ENCODE measurements at regions of chr4 and their contacts with region 1.

Region 1: GRCh38 chr4:117203231-117203630 is 117.9 kb upstream of the TRAM1L1 start:
- DNase-seq: no peak
- ATAC-seq: no peak
- H3K4me3 ChIP-seq: no peak overlapping the region
- H3K27ac ChIP-seq: no peak overlapping the region
- H3K4me1 ChIP-seq: no peaks in the 10 kb centered on the region
- H3K27me3 ChIP-seq: no peaks in the 10 kb centered on the region
- CTCF ChIP-seq: no peak
- POLR2A ChIP-seq: no peak
- RAD21 ChIP-seq: no peak

Region 2: DNA sequence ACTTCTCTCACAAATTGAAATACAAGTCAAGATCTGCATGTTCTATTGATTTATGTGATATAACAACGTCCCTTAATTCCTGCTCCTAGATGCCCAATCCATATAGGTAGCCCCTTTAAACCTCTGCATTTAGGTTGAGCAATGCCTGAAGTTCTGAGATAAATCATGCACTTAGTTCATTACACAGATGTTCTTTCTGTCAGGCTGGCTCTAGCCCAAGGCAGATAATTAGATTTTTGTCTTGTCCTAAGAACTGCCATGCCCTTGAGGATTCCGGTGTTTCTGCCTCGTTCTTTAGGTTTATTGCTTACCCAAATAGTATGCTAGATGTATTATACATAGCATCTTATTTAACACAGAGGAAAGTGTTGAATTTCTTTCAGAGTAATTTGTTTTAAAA is 260.9 kb before region 1 on chr4:
- CTCF ChIA-PET with region 1: no interaction called
- POLR2A ChIA-PET with region 1: no interaction called
- dilution Hi-C with region 1: no loop called
- in situ Hi-C with region 1: no loop called
- intact Hi-C with region 1: no loop called
- DNase-seq: no peak
- ATAC-seq: no peak
- H3K4me3 ChIP-seq: no peak overlapping the region
- H3K27ac ChIP-seq: no peak overlapping the region
- H3K4me1 ChIP-seq: no peaks in the 10 kb centered on the region
- H3K27me3 ChIP-seq: no peaks in the 10 kb centered on the region
- CTCF ChIP-seq: no peak
- POLR2A ChIP-seq: no peak
- RAD21 ChIP-seq: no peak

Region 3: GRCh38 chr4:117010695-117011094 is 192.5 kb before region 1 on chr4:
- CTCF ChIA-PET with region 1: no interaction called
- POLR2A ChIA-PET with region 1: no interaction called
- dilution Hi-C with region 1: no loop called
- in situ Hi-C with region 1: no loop called
- intact Hi-C with region 1: no loop called
- DNase-seq: no peak
- ATAC-seq: no peak
- H3K4me3 ChIP-seq: no peak overlapping the region
- H3K27ac ChIP-seq: no peak overlapping the region
- H3K4me1 ChIP-seq: no peaks in the 10 kb centered on the region
- H3K27me3 ChIP-seq: no peaks in the 10 kb centered on the region
- CTCF ChIP-seq: no peak
- POLR2A ChIP-seq: no peak
- RAD21 ChIP-seq: no peak

Region 4: DNA sequence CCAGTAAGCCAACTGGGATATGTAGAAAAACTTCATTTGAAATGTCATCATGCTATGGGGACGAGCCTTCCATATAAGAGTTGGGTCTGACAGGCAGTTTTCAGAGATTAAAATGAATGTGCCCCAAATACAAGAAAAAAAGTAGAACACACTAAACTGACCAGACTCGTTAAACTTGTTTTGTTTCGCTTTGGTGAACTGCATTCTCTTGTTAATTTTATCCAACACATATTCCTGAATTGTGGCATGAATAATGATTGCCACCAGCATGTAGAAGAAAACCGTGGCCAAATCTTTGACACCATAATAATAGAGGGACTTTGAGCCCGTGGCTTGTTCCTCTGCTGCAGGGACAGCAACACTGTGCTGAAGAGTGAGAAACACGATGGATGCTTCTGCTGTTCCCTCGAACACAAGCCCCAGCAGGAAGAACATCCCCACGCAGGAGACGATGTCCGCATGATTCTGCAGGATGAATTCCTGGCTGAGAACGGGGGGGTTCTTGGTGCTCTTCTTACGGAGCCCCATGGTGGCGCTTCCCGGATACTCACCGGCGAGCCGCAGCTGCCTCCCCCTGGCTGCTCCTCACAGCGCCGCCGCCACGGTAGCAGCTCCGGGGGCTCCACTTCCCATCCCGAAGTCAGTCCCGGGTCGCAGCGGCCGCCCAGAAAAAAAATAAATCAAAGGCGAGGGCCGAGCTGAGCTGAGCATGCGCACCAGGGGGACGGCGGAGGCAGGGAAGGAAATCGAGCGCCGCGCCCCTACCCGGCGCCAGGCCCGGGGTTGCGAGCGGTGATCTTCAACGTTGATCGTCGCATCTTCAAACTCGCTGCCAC is 118.1 kb before region 1 on chr4 and contains the start of gene TRAM1L1:
- CTCF ChIA-PET with region 1: no interaction called
- POLR2A ChIA-PET with region 1: no interaction called
- dilution Hi-C with region 1: no loop called
- in situ Hi-C with region 1: no loop called
- intact Hi-C with region 1: loop called (anchors 1 kb)
- DNase-seq: peak; percentile 63
- ATAC-seq: peak; percentile 96
- H3K4me3 ChIP-seq: peak within 1 kb of the TSS; percentile 52
- H3K27ac ChIP-seq: peak within 1 kb of the TSS; percentile 67
- H3K4me1 ChIP-seq: 0 out of 2 replicates have a peak, but pooled peaks cover 2% of the 10 kb centered on the region
- H3K27me3 ChIP-seq: no peaks in the 10 kb centered on the region
- CTCF ChIP-seq: no peak
- POLR2A ChIP-seq: no peak; the same call in 1 of the 2 replicates
- RAD21 ChIP-seq: no peak
- total RNA-seq, gene TRAM1L1: 3.4 and 5.3 TPM in 2 replicates

Region 5: GRCh38 chr4:117134386-117134785 is 68.8 kb before region 1 on chr4:
- CTCF ChIA-PET with region 1: no interaction called
- POLR2A ChIA-PET with region 1: no interaction called
- dilution Hi-C with region 1: no loop called
- in situ Hi-C with region 1: no loop called
- intact Hi-C with region 1: no loop called
- DNase-seq: peak; percentile 84
- ATAC-seq: peak; percentile 82
- H3K4me3 ChIP-seq: no peak overlapping the region
- H3K27ac ChIP-seq: no peak overlapping the region
- H3K4me1 ChIP-seq: no peaks in the 10 kb centered on the region
- H3K27me3 ChIP-seq: no peaks in the 10 kb centered on the region
- CTCF ChIP-seq: peak; percentile 77
- POLR2A ChIP-seq: no peak
- RAD21 ChIP-seq: peak; percentile 93